Activated CD8-positive, alpha-beta T cell treated with anti-CD3 and anti-CD28 coated beads, Interleukin-2, amount 10 ng/mL, durations not matched to agents 7 days and 5 days (primary cell): ENCODE measurements at regions of chr1 and their contacts with region 1.

Region 1: GRCh38 chr1:150515328-150516048 is at the start of gene FALEC:
- DNase-seq: peak; percentile 92
- ATAC-seq: peak; percentile 100
- H3K4me3 Mint-ChIP-seq: peak within 1 kb of the TSS; percentile 90
- H3K27ac Mint-ChIP-seq: peak within 1 kb of the TSS; percentile 81
- H3K4me1 Mint-ChIP-seq: peaks cover 18% of the 10 kb centered on the region
- H3K27me3 Mint-ChIP-seq: no peaks in the 10 kb centered on the region
- total RNA-seq, gene FALEC: not detected

Region 2: DNA sequence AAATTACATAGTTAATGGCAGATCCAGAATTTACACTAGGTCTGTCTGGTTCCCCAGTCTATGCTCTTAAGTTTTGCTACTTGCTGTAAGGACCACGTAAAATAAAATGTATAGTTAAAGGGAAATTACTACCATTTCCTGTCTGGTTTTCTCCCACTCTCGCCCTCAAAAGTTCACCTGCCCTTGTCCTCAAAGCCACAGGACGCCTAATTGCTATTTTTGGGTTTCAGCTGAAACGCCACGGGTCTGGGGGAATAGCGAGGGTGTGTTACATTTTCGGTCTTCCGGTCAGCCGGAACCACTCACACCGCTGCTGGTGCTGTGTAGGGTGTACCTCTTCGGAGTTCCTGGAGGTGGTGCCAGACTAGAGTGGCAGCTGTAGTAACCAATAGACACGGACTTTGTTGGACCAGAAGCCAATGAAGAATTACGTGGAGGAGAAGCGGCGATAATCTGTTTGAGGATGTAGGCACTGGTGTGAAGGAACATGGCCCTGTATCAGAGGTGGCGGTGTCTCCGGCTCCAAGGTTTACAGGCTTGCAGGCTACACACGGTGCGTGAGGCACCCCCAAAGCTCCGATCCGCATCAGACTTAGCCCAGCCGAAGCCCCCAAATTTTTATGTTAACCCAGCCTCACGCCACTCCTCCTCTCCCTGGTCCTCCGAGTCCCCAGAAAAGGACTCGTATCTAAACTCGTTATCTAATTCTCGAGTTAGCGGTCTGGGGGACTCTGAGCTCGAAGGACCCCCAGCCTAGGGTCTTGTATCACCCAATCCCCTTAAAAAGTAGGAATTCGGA is 28.3 kb before region 1 on chr1 and contains the start of gene TARS2:
- CTCF ChIA-PET with region 1: interaction called, 10 read pairs
- POLR2A ChIA-PET with region 1: interaction called, 4 read pairs
- DNase-seq: peak; percentile 98
- ATAC-seq: peak; percentile 100
- H3K4me3 Mint-ChIP-seq: peak within 1 kb of the TSS; percentile 87
- H3K27ac Mint-ChIP-seq: peak within 1 kb of the TSS; percentile 95
- H3K4me1 Mint-ChIP-seq: peaks cover 23% of the 10 kb centered on the region
- H3K27me3 Mint-ChIP-seq: no peaks in the 10 kb centered on the region
- total RNA-seq, gene TARS2: 29.8 to 33.7 TPM

Region 3: GRCh38 chr1:150532868-150533302 is 17.4 kb after region 1 on chr1:
- CTCF ChIA-PET with region 1: interaction called, 26 read pairs
- POLR2A ChIA-PET with region 1: interaction called, 3 read pairs
- DNase-seq: no peak
- ATAC-seq: no peak
- H3K4me3 Mint-ChIP-seq: no peak overlapping the region
- H3K27ac Mint-ChIP-seq: peak overlapping the region; percentile 19
- H3K4me1 Mint-ChIP-seq: peaks cover 5% of the 10 kb centered on the region
- H3K27me3 Mint-ChIP-seq: no peaks in the 10 kb centered on the region